Activated naive CD4-positive, alpha-beta T cell treated with anti-CD3 and anti-CD28 coated beads for 36 hours (primary cell): ENCODE measurements at regions of chr2 and their contacts with region 1.

Region 1: DNA sequence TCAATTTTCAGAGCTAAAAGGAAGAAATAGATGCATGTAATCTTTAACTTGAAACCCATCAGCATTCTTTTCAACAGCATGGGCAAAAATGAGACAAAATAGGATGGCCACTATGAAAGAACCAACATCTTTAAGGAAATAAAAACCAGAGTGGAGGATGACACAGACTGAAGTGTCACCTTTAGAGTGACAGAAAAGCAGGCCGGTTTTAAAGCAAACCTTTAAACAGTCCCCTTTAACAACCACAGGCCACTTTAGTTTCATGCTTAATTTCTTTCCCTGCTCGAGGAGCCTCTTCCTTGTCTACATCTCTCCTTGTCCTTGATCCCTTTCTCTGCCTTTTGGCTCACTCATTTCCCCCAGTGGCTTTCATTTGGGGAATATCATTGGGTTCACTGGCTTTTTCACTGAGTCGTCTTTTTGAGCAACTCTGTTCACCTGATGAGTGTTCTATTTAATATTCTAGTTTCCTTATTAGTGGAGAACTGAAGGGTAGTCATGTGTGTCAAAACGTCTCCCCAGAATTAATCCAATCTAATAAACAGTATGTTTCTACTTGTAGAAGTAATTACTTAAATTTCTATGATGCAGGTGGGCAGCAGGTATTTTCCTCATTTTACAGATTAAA is 72.5 kb downstream of the DOCK10 start:
- DNase-seq: no peak
- H3K4me3 Mint-ChIP-seq: no peak overlapping the region
- H3K27ac Mint-ChIP-seq: peak overlapping the region; percentile 79
- H3K4me1 Mint-ChIP-seq: peaks cover 65% of the 10 kb centered on the region
- H3K27me3 Mint-ChIP-seq: no peaks in the 10 kb centered on the region

Region 2: GRCh38 chr2:224885836-224886547 is 83.8 kb before region 1 on chr2:
- CTCF ChIA-PET with region 1: no interaction called
- intact Hi-C with region 1: loop called (anchors 1 kb)
- DNase-seq: no peak
- H3K4me3 Mint-ChIP-seq: no peak overlapping the region
- H3K27ac Mint-ChIP-seq: peak overlapping the region; percentile 81
- H3K4me1 Mint-ChIP-seq: peaks cover 71% of the 10 kb centered on the region
- H3K27me3 Mint-ChIP-seq: no peaks in the 10 kb centered on the region

Region 3: GRCh38 chr2:224957540-224958461 is 11.9 kb before region 1 on chr2:
- CTCF ChIA-PET with region 1: interaction called, 5 read pairs
- intact Hi-C with region 1: loop called (anchors 1 kb)
- DNase-seq: no peak
- H3K4me3 Mint-ChIP-seq: no peak overlapping the region
- H3K27ac Mint-ChIP-seq: peak overlapping the region; percentile 54
- H3K4me1 Mint-ChIP-seq: peaks cover 84% of the 10 kb centered on the region
- H3K27me3 Mint-ChIP-seq: no peaks in the 10 kb centered on the region

Region 4: DNA sequence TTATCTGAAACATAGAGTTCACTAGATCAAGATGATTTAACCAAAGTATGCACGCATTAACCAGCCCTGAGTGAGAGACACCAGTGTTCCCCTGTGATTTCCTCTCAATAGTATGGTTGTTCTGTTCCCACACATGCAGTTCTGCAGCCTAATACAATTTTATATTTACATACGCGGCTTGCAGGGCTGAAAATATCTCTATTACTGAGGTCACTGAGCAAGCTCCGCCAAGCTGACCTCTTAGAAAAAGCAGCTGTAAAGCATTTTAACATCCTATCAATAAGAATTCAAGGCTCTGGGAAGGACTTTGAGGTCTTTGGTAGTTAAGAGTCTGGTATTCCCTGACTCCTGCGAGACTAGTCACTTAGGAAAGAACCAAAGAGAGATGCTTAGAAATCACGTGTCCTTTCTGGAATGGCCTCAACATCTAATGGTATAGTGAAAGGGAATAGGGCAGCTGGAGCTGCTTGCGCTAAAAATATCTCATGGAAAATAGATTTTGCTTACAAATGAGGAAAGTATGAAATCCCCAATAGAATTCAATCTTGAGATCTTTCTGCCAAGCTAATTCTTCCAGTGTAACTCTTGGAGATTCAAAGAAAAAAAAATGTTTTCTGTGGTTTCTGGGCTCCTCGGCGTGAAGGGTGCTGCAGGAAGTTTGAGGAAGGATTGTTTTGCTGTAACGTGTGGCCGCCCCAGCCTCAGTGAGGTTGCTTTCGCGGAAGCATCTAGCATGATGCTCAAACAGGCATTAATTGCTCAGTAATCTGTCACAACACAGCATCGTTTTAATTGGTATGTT is 13.4 kb after region 1 on chr2:
- CTCF ChIA-PET with region 1: interaction called, 5 read pairs
- intact Hi-C with region 1: loop called (anchors 1 kb)
- DNase-seq: peak; percentile 61
- H3K4me3 Mint-ChIP-seq: peak overlapping the region; percentile 56
- H3K27ac Mint-ChIP-seq: peak overlapping the region; percentile 90
- H3K4me1 Mint-ChIP-seq: peaks cover 69% of the 10 kb centered on the region
- H3K27me3 Mint-ChIP-seq: no peaks in the 10 kb centered on the region

Region 5: DNA sequence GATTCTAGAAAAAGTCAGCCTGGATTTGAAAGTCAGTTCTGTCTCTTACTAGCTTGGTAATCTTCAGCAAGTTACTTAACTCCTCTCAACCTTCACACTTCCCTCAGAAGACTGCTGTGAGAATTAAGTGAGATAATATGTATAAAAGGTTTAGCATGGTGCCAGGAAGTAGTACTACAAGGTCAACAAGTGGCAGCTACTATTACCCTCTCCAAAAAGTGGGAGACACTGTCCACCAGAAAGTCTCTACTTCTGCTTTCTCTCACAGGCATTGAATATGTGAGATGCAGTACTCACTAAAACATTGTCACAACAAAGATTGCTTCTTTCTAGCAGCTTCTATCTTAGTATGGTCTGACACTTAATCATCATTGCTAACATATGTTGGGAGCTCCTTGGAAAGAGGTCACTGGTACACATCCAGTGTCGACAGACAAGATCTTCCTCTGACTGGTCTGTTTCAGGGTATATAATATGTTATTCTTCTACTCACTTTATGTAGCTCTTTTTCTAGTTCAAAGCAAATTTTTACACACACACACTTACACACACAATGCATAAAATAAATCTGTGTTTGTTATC is 24.6 kb after region 1 on chr2:
- CTCF ChIA-PET with region 1: no interaction called
- intact Hi-C with region 1: no loop called
- DNase-seq: no peak
- H3K4me3 Mint-ChIP-seq: no peak overlapping the region
- H3K27ac Mint-ChIP-seq: no peak overlapping the region
- H3K4me1 Mint-ChIP-seq: peaks cover 70% of the 10 kb centered on the region
- H3K27me3 Mint-ChIP-seq: no peaks in the 10 kb centered on the region